ENCODE measurements at regions of chr11 and their contacts with region 1.

Region 1: DNA sequence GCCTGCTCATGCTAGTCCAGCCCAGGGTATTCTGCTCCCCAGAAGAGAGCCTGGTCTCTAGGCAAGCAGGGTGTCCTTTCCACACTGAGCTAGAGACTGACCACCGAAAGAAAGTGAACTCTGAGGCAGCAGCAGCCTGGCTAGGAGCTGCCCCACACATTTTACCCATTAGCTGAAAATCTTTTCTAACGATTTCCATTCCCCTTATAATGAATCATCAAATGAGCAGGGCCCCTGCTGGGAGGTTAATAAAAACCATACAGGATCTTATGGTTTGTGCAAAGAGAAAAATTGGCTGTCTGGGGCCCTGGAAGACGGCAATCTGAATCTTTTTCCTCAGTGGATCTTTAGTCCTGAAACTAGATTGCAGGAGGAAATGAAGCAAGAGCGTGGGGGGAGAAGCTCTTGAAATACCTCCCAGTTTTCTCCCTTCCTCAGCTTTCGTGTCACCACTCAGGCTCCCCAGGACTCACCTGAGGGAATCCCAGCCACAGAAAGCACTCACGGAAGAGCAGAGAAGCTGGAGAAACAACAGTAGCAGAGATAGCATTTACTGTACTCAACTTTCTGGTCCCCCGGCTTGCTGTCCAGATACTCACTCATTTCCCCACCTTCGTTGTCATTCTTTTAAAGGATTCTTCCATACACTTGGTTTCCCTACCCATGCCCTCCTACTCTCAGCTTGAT is 74.7 kb upstream of the CD44 start:
- DNase-seq: no peak
- H3K4me3 ChIP-seq: no peak overlapping the region
- H3K27ac ChIP-seq: no peak overlapping the region
- H3K4me1 ChIP-seq: peaks cover 7% of the 10 kb centered on the region
- CTCF ChIP-seq: no peak

Region 2: GRCh38 chr11:35182317-35182939 is 118.2 kb after region 1 on chr11:
- CTCF ChIA-PET with region 1: no interaction called
- POLR2A ChIA-PET with region 1: no interaction called
- intact Hi-C with region 1: loop called (anchors 5 kb)
- DNase-seq: peak; percentile 38
- H3K4me3 ChIP-seq: no peak overlapping the region
- H3K27ac ChIP-seq: no peak overlapping the region
- H3K4me1 ChIP-seq: peaks cover 15% of the 10 kb centered on the region
- CTCF ChIP-seq: no peak